Naive thymus-derived CD4-positive, alpha-beta T cell (primary cell): ENCODE measurements at regions of chr5 and their contacts with region 1.

Region 1: DNA sequence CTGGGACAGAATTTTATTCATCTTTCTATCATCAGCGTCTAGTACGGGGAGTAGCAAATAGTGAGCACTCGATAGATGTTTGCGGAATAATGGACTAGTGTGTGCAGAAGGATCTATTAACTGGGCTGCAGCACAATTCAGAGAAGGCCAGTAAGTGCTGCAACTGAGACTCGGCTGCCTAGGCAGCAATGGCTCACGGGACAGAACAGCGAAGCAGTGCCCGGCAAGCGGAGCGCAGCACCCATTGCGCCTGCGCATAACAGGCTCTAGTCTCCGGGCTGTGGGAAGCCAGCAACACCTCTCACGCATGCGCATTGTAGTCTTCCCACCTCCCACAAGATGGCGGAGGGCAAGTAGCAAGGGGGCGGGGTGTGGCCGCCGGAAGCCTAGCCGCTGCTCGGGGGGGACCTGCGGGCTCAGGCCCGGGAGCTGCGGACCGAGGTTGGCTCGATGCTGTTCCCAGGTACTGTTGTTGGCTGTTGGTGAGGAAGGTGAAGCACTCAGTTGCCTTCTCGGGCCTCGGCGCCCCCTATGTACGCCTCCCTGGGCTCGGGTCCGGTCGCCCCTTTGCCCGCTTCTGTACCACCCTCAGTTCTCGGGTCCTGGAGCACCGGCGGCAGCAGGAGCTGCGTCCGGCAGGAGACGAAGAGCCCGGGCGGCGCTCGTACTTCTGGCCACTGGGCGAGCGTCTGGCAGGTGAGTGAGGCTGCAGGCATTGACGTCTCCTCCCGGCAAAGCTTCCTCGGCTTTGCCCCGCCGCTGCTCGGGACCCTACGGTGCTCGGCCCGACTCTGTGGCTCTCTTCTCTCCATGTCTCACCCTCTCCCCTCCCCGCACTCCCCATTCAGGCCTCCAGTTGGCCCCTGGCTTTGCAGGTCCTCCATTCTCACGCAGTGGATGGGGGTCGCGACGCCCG is 30.2 kb upstream of the APC start:
- DNase-seq: peak; percentile 83 to 98 (median 97)
- ATAC-seq: peak; percentile 96
- H3K4me3 ChIP-seq: peak overlapping the region; percentile 92
- H3K4me3 Mint-ChIP-seq: peak overlapping the region; percentile 79 to 98 (median 94)
- H3K27ac ChIP-seq: peak overlapping the region; percentile 82
- H3K27ac Mint-ChIP-seq: peak overlapping the region; percentile 88 to 96 (median 92)
- H3K4me1 ChIP-seq: peaks cover 29 to 47% of the 10 kb centered on the region in 2 donors
- H3K4me1 Mint-ChIP-seq: peaks cover 50 to 62% (median 57%) of the 10 kb centered on the region in 7 donors
- H3K27me3 ChIP-seq: no peaks in the 10 kb centered on the region
- H3K27me3 Mint-ChIP-seq: peaks cover 0 to 8% (median 0%) of the 10 kb centered on the region in 5 donors

Region 2: DNA sequence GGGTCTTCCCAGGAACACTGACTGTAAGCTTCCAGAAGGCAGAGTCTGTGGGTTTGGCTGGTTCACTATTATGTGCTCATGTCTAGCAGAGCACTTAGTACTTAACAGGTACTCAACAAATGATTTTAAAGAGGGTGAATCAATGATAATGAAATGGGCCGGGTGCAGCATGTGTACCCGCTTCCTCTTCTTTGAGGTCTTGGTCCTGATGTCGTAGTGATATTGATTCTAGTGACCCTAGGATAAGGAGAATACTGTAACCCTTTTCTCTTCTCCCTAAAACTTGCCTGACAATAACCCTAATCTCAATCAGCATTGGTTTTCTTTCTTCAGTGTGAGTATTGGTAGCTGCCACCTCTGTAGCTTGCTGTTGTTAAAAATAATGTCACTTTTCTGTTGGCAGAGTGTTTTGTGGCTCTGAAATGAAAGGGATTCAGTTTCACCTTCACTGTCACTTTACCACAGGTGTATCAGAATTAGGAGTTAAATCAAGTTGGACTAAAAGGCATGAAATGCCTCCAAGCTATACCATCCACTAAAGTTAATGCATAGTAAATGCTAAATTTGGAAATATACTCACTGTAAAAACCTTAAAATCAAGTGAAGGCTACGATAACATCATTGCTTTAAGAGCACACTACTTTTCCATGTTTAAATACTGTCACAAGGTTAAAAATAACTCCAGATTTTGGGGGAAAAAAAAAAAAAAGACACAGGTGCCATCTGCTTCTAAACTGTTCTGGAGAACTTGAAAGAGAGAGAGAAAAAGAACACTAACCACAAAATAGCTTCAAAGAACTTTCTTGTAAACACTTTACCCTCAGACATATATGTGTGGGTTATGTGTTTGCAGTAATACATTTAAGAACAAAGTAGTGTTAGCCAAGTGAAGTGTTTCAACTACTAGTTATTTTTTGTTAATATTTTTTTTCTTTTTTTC is 1477.3 kb before region 1 on chr5:
- CTCF ChIA-PET with region 1: no interaction called
- POLR2A ChIA-PET with region 1: no interaction called
- intact Hi-C with region 1: loop called in 1 of 2 experiments (anchors 5 kb)
- DNase-seq: peak in 7 of 9 donors; percentile 52 to 86 (median 79)
- ATAC-seq: peak; percentile 73
- H3K4me3 ChIP-seq: peak overlapping the region; percentile 37
- H3K4me3 Mint-ChIP-seq: peak overlapping the region; percentile 79 to 98 (median 90)
- H3K27ac ChIP-seq: peak overlapping the region; percentile 93
- H3K27ac Mint-ChIP-seq: peak overlapping the region; percentile 93 to 100 (median 98)
- H3K4me1 ChIP-seq: peaks cover 64 to 83% of the 10 kb centered on the region in 2 donors
- H3K4me1 Mint-ChIP-seq: peaks cover 38 to 78% (median 73%) of the 10 kb centered on the region in 7 donors
- H3K27me3 ChIP-seq: no peaks in the 10 kb centered on the region
- H3K27me3 Mint-ChIP-seq: no peaks in the 10 kb centered on the region

Region 3: GRCh38 chr5:111757355-111758283 is 949.8 kb before region 1 on chr5:
- CTCF ChIA-PET with region 1: no interaction called
- POLR2A ChIA-PET with region 1: no interaction called
- intact Hi-C with region 1: loop called in 1 of 2 experiments (anchors 2 kb)
- DNase-seq: peak; percentile 65 to 89 (median 86)
- ATAC-seq: peak; percentile 87
- H3K4me3 ChIP-seq: peak overlapping the region; percentile 64
- H3K4me3 Mint-ChIP-seq: peak overlapping the region; percentile 83 to 94 (median 90)
- H3K27ac ChIP-seq: peak overlapping the region; percentile 75
- H3K27ac Mint-ChIP-seq: peak overlapping the region; percentile 57 to 92 (median 83)
- H3K4me1 ChIP-seq: peaks cover 0 to 4% of the 10 kb centered on the region in 2 donors
- H3K4me1 Mint-ChIP-seq: peaks cover 4 to 29% (median 18%) of the 10 kb centered on the region in 7 donors
- H3K27me3 ChIP-seq: no peaks in the 10 kb centered on the region
- H3K27me3 Mint-ChIP-seq: peaks cover 0 to 6% (median 0%) of the 10 kb centered on the region in 5 donors

Region 4: DNA sequence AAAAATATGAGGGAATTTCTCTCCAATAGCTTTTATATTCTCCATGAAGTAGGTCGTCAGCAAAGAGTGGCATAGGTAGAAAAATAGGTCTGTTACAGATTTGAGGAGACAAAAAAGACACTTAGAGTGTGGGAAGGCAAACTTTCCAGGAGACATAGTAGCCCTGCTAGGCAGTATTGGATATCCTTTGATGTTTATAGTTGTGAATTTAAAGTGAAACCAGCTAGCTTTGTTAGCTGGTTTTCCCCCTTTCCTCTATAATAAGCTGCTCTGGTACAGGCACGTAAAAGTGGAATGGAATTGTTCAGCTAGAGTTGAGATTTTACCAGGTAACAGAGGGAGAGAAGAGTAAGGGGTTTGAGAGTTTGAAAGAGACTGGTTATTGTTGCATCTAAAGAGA is 13.1 kb after region 1 on chr5:
- CTCF ChIA-PET with region 1: no interaction called
- POLR2A ChIA-PET with region 1: interaction called, 4 read pairs
- intact Hi-C with region 1: loop called in 1 of 2 experiments (anchors 1 kb)
- DNase-seq: no peak
- ATAC-seq: no peak
- H3K4me3 ChIP-seq: no peak overlapping the region
- H3K4me3 Mint-ChIP-seq: no peak overlapping the region
- H3K27ac ChIP-seq: no peak overlapping the region
- H3K27ac Mint-ChIP-seq: peak overlapping the region in 2 of 9 donors; percentile 3 to 12
- H3K4me1 ChIP-seq: no peaks in the 10 kb centered on the region
- H3K4me1 Mint-ChIP-seq: peaks cover 13 to 89% (median 77%) of the 10 kb centered on the region in 7 donors
- H3K27me3 ChIP-seq: no peaks in the 10 kb centered on the region
- H3K27me3 Mint-ChIP-seq: no peaks in the 10 kb centered on the region

Region 5: GRCh38 chr5:112757468-112758208 is 50.2 kb after region 1 on chr5:
- CTCF ChIA-PET with region 1: interaction called, 3 read pairs
- POLR2A ChIA-PET with region 1: no interaction called
- intact Hi-C with region 1: loop called (anchors 1 to 5 kb)
- DNase-seq: peak in 7 of 9 donors; percentile 14 to 64 (median 52)
- ATAC-seq: peak; percentile 88
- H3K4me3 ChIP-seq: no peak overlapping the region
- H3K4me3 Mint-ChIP-seq: no peak overlapping the region
- H3K27ac ChIP-seq: no peak overlapping the region
- H3K27ac Mint-ChIP-seq: peak overlapping the region in 5 of 9 donors; percentile 36 to 82 (median 58)
- H3K4me1 ChIP-seq: no peaks in the 10 kb centered on the region
- H3K4me1 Mint-ChIP-seq: peaks cover 3 to 25% (median 18%) of the 10 kb centered on the region in 7 donors
- H3K27me3 ChIP-seq: no peaks in the 10 kb centered on the region
- H3K27me3 Mint-ChIP-seq: no peaks in the 10 kb centered on the region

Region 6: DNA sequence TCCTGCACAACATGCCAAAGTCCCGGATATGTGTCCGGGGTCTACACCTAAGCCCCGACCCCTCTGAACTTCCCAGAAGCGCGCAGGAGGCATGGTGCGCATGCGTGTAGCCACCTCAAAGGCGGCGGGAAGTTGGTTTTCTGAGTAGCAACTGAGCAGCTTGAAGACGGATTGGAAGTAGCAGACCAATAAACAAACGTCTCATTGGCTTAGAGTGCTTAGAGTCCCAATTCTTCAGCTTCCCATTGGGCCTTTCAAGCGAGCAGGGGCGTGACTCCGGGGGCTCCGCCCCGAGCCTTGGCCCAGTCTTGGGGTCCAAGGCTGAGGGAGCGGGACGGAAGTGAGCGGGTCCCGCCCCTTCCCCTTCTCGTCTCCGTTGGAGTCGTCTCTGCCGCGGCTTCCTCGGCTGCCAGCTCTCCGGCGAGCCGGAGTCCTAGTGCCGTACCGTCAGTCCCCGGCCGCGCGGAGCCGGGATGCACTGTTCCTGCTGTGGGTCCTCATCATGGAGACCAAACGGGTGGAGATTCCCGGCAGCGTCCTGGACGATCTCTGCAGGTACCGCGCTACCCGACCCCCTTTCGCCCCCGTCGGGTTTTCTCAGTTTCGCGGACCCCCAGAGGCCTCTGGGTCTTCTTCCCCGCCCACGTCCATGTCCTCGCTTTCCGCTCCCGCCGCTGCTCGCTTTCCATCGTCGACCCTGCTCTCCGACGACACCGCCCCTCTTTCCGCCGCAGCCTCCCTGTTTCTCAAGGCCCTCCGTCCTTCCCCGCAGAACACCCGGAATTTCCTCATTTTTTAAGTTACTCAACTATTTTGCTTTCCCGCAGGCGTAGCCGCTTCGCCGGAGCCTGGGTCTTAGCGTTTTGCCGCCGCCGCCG is 269.2 kb after region 1 on chr5 and contains the start of gene DCP2:
- CTCF ChIA-PET with region 1: no interaction called
- POLR2A ChIA-PET with region 1: interaction called, 4 read pairs
- intact Hi-C with region 1: loop called (anchors 1 kb)
- DNase-seq: peak; percentile 84 to 98 (median 97)
- ATAC-seq: peak; percentile 98
- H3K4me3 ChIP-seq: peak within 1 kb of the TSS; percentile 75
- H3K4me3 Mint-ChIP-seq: peak within 1 kb of the TSS; percentile 88 to 99 (median 98)
- H3K27ac ChIP-seq: peak within 1 kb of the TSS; percentile 83
- H3K27ac Mint-ChIP-seq: peak within 1 kb of the TSS; percentile 89 to 98 (median 95)
- H3K4me1 ChIP-seq: peaks cover 7 to 21% of the 10 kb centered on the region in 2 donors
- H3K4me1 Mint-ChIP-seq: peaks cover 35 to 54% (median 51%) of the 10 kb centered on the region in 7 donors
- H3K27me3 ChIP-seq: no peaks in the 10 kb centered on the region
- H3K27me3 Mint-ChIP-seq: no peaks in the 10 kb centered on the region
- total RNA-seq, gene DCP2: 60.2 to 101 (median 85.1) TPM

Region 7: DNA sequence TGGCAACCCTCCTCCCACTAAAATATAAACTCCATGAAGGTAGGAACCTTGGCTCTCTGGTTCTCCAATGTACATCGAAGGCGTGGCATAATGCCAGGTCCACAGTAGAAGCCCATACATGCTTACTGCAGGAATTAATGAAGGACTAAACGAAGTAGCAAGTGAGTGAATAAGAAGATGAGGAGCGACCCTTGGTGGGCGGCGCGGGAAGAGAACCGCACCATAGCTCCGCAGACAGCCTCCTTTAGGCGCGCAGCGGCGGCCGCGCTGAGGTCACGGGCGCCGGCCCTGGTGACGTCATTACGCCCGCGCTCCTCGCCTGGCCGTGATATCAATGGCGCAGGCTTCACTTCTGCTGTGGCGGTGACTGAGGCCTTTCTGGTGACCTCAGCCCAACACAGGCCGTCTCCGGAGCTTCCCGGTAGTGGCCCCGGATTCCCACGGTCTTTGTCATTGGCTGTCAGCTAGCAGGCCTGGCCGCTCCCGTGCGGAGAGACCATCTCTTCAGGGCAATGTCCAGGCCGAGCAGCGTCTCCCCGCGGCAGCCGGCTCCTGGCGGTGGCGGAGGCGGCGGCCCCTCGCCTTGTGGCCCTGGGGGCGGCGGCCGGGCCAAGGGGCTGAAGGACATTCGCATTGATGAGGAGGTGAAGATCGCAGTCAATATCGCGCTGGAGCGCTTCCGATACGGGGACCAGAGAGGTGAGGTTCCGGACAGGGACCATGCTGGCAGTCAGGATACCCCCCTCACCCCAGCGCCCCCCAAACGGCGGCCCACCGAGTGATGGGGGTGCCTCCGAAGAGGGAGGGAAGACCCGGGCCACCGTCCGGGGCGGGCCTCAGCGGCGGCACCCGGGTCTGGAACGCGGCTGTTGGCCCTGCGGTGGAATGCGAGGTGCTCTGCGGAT is 806.2 kb after region 1 on chr5 and contains the start of gene YTHDC2:
- CTCF ChIA-PET with region 1: no interaction called
- POLR2A ChIA-PET with region 1: no interaction called
- intact Hi-C with region 1: loop called (anchors 1 to 5 kb)
- DNase-seq: peak; percentile 79 to 89 (median 87)
- ATAC-seq: peak; percentile 97
- H3K4me3 ChIP-seq: peak within 1 kb of the TSS; percentile 85
- H3K4me3 Mint-ChIP-seq: peak within 1 kb of the TSS; percentile 86 to 98 (median 94)
- H3K27ac ChIP-seq: peak within 1 kb of the TSS; percentile 94
- H3K27ac Mint-ChIP-seq: peak within 1 kb of the TSS; percentile 86 to 98 (median 97)
- H3K4me1 ChIP-seq: peaks cover 6 to 9% of the 10 kb centered on the region in 2 donors
- H3K4me1 Mint-ChIP-seq: peaks cover 27 to 51% (median 44%) of the 10 kb centered on the region in 7 donors
- H3K27me3 ChIP-seq: no peaks in the 10 kb centered on the region
- H3K27me3 Mint-ChIP-seq: peaks cover 12 to 19% (median 13%) of the 10 kb centered on the region in 5 donors
- total RNA-seq, gene YTHDC2: 27.7 to 53.6 (median 49.2) TPM